GM10248 (cell line): ENCODE measurements at regions of chr15 and their contacts with region 1.

Region 1: DNA sequence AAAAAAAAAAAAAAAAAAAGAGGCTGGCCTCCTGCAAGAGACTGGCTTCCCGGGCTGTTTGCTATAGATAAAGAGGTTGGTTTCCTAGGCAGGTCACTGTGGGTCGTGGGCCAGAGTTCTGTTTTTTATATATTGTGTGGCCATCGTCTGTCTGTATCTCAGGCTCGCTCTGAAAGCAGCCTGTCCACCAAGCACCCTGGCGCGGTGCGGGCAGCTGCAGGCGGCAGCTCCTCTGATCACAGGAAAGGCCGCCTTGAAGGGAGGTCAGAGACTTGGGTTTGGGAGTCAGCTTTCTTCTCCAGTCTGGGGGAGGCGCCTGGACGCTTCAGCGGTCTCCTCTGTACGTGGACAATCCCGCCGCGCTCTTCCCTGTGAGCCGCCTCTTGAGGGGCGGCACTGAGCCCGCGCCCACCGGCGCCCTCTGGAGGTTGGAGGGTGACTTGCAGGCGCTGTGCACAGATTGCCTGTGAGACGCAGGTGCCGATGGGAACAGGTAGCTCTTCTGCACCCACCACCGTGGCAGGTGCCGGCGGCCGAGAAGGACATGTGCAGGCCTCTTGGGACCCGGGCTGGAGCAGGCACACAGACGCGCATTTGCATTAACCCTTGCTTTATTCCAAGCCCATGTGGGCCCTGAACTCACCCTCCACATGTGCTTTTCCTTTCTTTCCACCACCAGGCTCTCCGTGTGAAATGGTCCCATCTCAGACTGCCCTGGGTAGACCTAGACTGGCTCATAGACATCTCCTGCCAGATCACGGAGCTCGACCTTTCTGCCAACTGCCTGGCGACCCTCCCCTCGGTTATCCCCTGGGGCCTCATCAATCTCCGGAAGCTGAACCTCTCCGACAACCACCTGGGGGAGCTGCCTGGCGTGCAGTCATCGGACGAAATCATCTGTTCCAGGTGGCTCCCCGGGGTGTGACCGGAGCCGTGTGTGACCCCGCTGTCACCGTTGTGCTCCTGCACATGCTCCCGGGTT is 89.3 kb downstream of the LRRK1 start:
- DNase-seq: peak; percentile 90
- CTCF ChIP-seq: peak; percentile 97

Region 2: DNA sequence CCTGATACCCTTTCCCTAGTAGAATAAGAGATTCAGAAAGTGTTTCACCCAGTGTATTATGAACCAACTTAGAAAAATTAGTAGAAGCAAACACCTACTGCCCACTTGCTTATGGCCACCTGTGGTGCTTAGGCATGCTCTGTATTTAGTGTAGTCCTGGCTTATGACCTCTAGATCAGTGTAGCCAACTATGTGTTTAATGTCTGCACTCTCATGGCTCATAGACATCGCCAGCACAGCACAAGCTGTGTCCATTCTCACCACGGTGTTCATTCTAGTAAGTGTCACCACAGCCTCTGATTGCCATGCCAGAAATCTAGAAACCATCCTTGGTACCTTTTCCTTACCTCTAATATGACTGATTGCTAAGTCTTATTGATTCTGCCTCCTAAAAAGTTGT is 391.7 kb before region 1 on chr15:
- CTCF ChIA-PET with region 1: interaction called, 15 read pairs
- POLR2A ChIA-PET with region 1: no interaction called
- DNase-seq: no peak
- CTCF ChIP-seq: no peak

Region 3: DNA sequence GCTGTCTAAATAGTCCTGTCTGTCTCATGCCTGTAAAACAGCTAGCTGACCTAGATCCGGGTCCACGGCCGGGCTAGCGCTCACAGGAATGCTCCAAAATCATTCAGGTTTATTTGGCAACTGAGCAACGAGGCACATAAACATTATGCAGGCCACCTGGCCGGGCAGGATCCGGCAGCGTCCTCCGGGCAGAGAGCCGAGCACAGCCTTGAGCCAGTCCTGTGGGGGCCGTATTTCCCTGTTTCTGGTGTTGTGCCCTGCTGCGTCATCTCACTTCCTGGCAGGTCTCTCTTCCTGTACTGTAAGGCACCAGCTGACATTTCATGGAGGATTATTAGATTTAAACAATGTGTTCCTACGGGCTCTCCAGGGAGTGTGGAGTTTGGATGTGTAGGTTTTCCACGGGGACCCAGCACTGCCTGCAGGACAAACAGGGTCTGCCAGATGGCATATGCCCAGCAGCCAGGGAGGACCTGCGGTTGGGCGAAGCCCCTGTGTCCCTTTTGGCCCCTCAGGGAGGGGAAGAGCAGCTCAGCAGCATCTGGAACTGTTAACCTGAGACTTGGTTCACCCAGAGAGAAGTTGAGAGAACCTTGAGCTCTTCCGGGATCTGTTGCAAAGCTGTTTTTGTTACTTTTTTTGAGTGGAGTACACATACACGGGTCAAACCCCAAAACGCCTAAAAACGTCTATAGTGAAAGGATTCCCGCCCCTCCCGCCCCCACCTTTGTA is 105.8 kb before region 1 on chr15:
- CTCF ChIA-PET with region 1: interaction called, 23 read pairs
- POLR2A ChIA-PET with region 1: no interaction called
- DNase-seq: no peak
- CTCF ChIP-seq: no peak

Region 4: GRCh38 chr15:100940767-100941379 is 67.6 kb before region 1 on chr15:
- CTCF ChIA-PET with region 1: interaction called, 34 read pairs
- POLR2A ChIA-PET with region 1: no interaction called
- DNase-seq: peak; percentile 64
- CTCF ChIP-seq: no peak

Region 5: GRCh38 chr15:101024073-101024695 is 15.7 kb after region 1 on chr15:
- CTCF ChIA-PET with region 1: interaction called, 83 read pairs
- POLR2A ChIA-PET with region 1: no interaction called
- DNase-seq: no peak
- CTCF ChIP-seq: no peak

Region 6: DNA sequence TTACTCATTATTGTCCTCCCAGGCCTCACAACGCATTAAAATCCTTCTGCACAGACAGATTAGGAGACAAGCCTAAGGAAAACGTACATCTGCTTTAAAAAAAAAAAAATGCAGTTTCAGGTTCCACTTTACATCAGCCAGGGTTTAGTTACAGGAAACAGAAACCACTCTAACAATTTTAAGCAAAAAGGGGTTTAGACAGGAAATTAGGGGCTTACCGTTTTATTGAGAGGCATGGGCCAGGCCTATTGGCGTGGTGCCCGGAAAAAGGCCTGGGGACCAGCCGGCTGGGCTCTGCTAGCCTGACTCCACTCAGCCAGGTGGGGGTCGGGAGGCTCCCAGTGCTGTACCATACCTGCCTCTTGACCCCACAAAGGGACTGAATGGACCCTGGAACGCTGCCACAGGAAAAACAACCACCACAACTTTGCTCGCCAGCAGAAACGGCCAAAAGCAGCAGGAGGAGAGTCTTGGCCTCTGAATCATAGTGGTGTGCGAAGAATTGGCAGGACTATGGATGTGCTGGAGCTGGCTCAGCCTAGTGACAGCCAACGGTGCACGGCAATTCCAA is 119.1 kb after region 1 on chr15:
- CTCF ChIA-PET with region 1: no interaction called
- POLR2A ChIA-PET with region 1: no interaction called
- DNase-seq: peak; percentile 61
- CTCF ChIP-seq: no peak

Region 7: GRCh38 chr15:101258238-101259144 is 250.0 kb after region 1 on chr15:
- CTCF ChIA-PET with region 1: interaction called, 17 read pairs
- POLR2A ChIA-PET with region 1: no interaction called
- DNase-seq: peak; percentile 48
- CTCF ChIP-seq: peak; percentile 83